Tibial artery (tissue), 4 donors: ENCODE measurements at regions of chr2 and their contacts with region 1.

Region 1: GRCh38 chr2:164841719-164842623 is at the start of gene COBLL1:
- DNase-seq: peak; percentile 78 to 90
- H3K4me3 ChIP-seq: peak within 1 kb of the TSS; percentile 89 to 96
- H3K27ac ChIP-seq: peak within 1 kb of the TSS; percentile 98
- H3K4me1 ChIP-seq: peaks cover 0 to 33% (median 5%) of the 10 kb centered on the region in 4 donors
- H3K27me3 ChIP-seq: no peaks in the 10 kb centered on the region
- CTCF ChIP-seq: peak; percentile 82 to 84

Region 2: DNA sequence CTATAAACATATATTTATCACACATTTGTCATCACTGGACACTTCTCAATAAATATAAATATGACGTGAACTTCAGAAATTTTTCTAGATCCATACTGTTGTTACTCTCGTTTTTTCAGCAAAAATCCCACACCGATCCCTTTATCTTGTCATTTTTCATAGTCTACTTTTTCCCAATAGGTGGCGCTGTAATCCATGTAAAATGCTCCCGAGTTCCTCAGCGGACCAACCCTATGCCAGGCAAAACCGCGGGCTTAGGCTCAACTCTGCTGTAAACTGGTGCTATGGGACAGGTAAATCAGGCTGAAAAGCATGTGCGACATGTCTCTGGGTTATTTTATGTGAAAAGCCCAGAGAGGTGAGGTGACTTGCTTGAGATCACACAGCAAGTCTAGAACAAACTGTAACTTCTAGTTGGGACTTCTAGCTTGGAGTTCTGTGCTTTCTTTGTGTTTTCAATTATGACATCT is 104.3 kb before region 1 on chr2:
- intact Hi-C with region 1: loop called (anchors 5 kb)
- DNase-seq: peak in 1 of 2 donors; percentile 54
- H3K4me3 ChIP-seq: no peak overlapping the region
- H3K27ac ChIP-seq: peak overlapping the region; percentile 32 to 36
- H3K4me1 ChIP-seq: peaks cover 0 to 58% (median 17%) of the 10 kb centered on the region in 4 donors
- H3K27me3 ChIP-seq: no peaks in the 10 kb centered on the region
- CTCF ChIP-seq: peak; percentile 64 to 80

Region 3: GRCh38 chr2:164782323-164782722 is 59.6 kb before region 1 on chr2:
- intact Hi-C with region 1: loop called (anchors 10 kb)
- DNase-seq: peak in 1 of 2 donors; percentile 58
- H3K4me3 ChIP-seq: no peak overlapping the region
- H3K27ac ChIP-seq: peak overlapping the region; percentile 76 to 81
- H3K4me1 ChIP-seq: peaks cover 0 to 95% (median 39%) of the 10 kb centered on the region in 4 donors
- H3K27me3 ChIP-seq: no peaks in the 10 kb centered on the region
- CTCF ChIP-seq: no peak

Region 4: DNA sequence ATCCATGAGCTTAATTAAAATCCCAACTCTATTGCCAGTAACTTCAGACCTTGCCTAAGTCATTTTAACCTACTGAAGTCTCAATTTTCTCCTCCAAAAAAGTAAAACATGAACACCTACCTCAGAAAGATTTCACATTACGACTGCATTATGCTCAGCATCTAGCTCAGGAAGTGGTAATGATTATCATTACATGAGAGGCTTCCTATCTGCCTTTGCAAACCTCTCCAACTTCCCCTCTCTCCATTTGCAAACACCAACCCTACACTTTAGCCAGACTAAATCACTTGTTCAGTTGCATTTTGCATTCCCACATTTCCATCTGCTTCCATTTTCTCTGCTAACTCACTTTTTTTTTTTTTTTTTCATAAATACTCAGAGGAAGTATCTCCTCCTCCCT is 106.6 kb after region 1 on chr2:
- intact Hi-C with region 1: no loop called
- DNase-seq: no peak
- H3K4me3 ChIP-seq: no peak overlapping the region
- H3K27ac ChIP-seq: no peak overlapping the region
- H3K4me1 ChIP-seq: no peaks in the 10 kb centered on the region
- H3K27me3 ChIP-seq: no peaks in the 10 kb centered on the region
- CTCF ChIP-seq: no peak

Region 5: DNA sequence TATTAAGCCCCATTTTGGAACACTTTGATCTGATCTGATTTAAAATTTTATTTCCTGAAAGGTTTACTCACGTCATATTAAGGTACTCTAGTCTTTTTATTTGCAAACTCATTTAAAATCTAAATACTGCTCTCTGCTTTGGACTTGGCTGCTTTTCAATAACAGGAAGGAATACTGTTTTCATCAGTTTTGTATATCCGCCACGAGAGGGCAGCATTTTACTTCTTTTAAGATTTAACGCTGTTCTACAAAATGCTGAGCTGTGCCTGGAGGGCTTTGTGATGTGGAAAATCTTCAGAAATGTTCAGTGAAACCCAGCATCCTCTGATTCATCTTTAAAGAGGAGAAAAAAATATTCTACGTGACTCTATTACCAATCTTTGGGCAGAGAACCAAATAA is 150.8 kb after region 1 on chr2:
- intact Hi-C with region 1: no loop called
- DNase-seq: peak in 1 of 2 donors; percentile 37
- H3K4me3 ChIP-seq: no peak overlapping the region
- H3K27ac ChIP-seq: peak overlapping the region; percentile 65 to 70
- H3K4me1 ChIP-seq: peaks cover 0 to 39% (median 18%) of the 10 kb centered on the region in 4 donors
- H3K27me3 ChIP-seq: no peaks in the 10 kb centered on the region
- CTCF ChIP-seq: peak; percentile 16 to 44

Region 6: GRCh38 chr2:165357758-165358157 is 515.8 kb after region 1 on chr2:
- intact Hi-C with region 1: no loop called
- DNase-seq: no peak
- H3K4me3 ChIP-seq: no peak overlapping the region
- H3K27ac ChIP-seq: no peak overlapping the region
- H3K4me1 ChIP-seq: no peaks in the 10 kb centered on the region
- H3K27me3 ChIP-seq: no peaks in the 10 kb centered on the region
- CTCF ChIP-seq: no peak